Activated T-helper 2 cell treated with anti-CD3 and anti-CD28 coated beads, Interferon-gamma antibody, Interleukin-2, Interleukin-4, amounts not matched to agents 10 μg/mL and 5 μg/mL and 100 μg/mL, durations not matched to agents 14 hours and 24 hours and 36 hours (primary cell): ENCODE measurements at regions of chr20 and their contacts with region 1.

Region 1: GRCh38 chr20:54207743-54208547 is at the start of gene PFDN4:
- DNase-seq: peak; percentile 78
- H3K4me3 Mint-ChIP-seq: peak within 1 kb of the TSS; percentile 94
- H3K27ac Mint-ChIP-seq: peak within 1 kb of the TSS; percentile 99
- H3K4me1 Mint-ChIP-seq: peaks cover 26% of the 10 kb centered on the region
- H3K27me3 Mint-ChIP-seq: no peaks in the 10 kb centered on the region
- total RNA-seq, gene PFDN4: 52.2 and 55.1 TPM in 2 replicates

Region 2: DNA sequence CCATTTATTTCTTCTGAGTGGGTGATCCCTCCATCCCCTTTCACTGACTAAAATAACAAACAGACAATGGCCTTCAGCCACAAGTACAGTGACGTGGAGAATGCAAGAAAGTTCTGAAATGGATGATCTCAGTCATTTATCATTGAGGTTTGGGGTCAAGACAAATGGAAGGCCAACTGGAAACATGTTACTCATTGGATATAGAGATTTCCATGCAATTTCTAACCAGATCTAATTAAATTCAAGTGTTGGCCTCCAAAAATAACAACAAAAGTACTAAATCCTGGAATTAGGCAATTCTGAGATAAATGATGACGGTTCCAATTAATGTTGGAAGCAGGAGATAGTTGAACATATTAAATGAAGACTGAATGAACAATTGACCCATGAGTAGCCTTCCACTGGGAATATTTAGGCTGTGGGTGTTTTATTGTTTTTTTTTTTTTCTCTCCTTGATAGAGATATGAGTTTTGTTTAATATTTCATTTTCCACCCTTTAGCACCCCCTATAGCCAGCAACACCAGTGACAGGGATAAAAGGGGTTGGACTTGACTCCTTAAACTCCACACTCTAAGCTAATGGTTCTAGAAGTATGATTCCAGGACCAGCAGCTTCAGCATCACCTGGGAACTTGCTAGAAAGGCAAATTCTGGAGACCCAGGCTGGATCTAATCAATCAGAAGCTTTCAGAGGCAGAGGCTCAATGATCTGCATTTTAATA is 250.3 kb before region 1 on chr20:
- intact Hi-C with region 1: loop called (anchors 10 kb)
- DNase-seq: no peak
- H3K4me3 Mint-ChIP-seq: no peak overlapping the region
- H3K27ac Mint-ChIP-seq: no peak overlapping the region
- H3K4me1 Mint-ChIP-seq: peaks cover 8% of the 10 kb centered on the region
- H3K27me3 Mint-ChIP-seq: peaks cover 32% of the 10 kb centered on the region

Region 3: DNA sequence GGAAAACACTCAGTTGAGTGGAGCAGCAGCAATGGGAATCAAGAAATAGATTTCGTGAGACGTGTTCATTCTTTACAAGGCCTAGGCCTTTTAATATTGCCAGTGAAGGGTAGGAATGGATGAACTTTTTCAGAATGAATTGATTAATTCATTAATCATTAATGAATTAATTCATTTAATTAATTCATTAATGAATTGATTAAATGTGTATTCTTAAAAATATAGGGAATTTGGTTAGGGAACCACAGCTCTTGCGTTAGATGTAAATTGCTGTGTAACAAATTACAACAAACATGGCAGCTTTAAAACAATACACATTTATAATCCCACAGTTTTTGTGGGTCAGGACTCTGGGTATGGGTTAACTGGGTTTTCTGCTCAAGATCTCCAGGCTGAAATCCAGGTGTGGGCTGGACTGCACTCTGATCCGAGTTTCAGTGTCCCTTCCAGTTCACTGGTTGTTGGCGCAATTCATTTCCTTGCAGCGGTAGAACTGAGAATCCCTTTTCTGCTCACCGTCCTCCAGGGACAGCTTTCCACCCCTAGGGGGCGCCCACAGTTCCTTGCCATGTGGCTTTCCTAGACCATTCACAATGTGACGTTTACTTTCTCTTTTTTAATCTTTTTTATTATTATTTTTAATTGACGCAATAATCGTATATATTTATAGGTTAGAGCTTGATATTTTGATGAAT is 104.7 kb before region 1 on chr20:
- intact Hi-C with region 1: no loop called
- DNase-seq: peak; percentile 67
- H3K4me3 Mint-ChIP-seq: no peak overlapping the region
- H3K27ac Mint-ChIP-seq: no peak overlapping the region
- H3K4me1 Mint-ChIP-seq: peaks cover 5% of the 10 kb centered on the region
- H3K27me3 Mint-ChIP-seq: peaks cover 9% of the 10 kb centered on the region

Region 4: GRCh38 chr20:54649511-54649962 is 441.6 kb after region 1 on chr20:
- intact Hi-C with region 1: loop called (anchors 5 kb)
- DNase-seq: peak; percentile 34
- H3K4me3 Mint-ChIP-seq: no peak overlapping the region
- H3K27ac Mint-ChIP-seq: no peak overlapping the region
- H3K4me1 Mint-ChIP-seq: no peaks in the 10 kb centered on the region
- H3K27me3 Mint-ChIP-seq: peaks cover 2% of the 10 kb centered on the region